ENCODE measurements at regions of chr5 and their contacts with region 1.

Region 1: DNA sequence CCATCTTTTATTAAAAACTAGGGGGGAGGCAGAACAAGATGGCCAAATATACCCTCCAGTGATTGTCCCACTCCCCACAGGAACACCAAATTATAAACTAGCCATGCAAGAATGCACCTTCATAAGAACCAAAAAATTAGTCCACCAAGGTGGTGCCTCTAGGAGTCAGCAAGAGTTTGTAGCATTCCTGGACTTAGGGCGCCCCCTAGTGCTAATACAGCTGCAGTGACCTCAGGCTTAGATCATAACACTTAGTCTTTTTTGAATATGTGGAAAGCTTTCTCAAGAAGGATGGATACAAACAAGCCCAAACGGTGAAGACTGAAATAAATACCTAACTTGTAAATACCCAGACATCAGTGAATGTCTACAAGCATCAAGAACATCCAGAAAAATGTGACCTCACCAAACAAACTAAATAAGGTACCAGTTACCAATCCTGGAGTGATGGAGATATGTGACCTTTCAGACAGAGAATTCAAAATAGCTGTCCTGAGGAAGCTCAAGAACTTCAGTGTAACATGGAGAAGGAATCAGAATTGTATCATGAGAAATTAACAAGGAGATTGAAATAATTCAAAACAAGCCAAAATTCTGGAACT is 19.3 kb downstream of the PPIP5K2 start:
- DNase-seq: peak; percentile 94
- H3K4me3 Mint-ChIP-seq: no peak overlapping the region
- H3K27ac Mint-ChIP-seq: no peak overlapping the region
- H3K4me1 Mint-ChIP-seq: peaks cover 4% of the 10 kb centered on the region
- H3K27me3 Mint-ChIP-seq: no peaks in the 10 kb centered on the region

Region 2: DNA sequence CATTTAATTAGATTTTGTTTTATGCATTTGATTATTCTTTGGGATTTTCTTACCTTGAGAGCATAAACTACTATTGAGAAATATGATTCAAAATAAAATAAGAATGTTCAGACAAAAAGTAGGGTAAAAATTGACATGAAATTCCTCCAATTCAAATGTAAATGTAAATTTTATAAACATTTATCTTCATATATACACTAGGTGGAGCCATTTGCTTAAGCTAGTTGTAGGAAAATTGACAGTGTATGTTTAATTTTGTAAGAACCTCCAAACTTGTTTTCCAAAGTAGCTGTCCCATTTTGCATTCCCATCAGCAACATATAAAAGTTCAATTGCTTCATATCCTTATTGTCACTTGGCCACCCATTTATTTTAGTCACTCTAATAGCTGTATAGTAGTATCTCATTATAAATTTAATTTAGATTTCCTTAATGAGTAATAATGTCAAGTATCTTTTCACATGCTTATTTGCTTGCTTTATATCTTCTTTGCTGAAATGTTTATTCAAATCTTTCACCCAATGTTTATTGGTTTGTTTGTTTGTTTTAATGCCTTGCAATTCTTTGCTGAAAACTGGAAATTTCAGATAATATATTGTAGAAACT is 602.9 kb before region 1 on chr5:
- intact Hi-C with region 1: loop called (anchors 1 kb)
- DNase-seq: no peak
- H3K4me3 Mint-ChIP-seq: no peak overlapping the region
- H3K27ac Mint-ChIP-seq: no peak overlapping the region
- H3K4me1 Mint-ChIP-seq: no peaks in the 10 kb centered on the region
- H3K27me3 Mint-ChIP-seq: peaks cover 7% of the 10 kb centered on the region

Region 3: DNA sequence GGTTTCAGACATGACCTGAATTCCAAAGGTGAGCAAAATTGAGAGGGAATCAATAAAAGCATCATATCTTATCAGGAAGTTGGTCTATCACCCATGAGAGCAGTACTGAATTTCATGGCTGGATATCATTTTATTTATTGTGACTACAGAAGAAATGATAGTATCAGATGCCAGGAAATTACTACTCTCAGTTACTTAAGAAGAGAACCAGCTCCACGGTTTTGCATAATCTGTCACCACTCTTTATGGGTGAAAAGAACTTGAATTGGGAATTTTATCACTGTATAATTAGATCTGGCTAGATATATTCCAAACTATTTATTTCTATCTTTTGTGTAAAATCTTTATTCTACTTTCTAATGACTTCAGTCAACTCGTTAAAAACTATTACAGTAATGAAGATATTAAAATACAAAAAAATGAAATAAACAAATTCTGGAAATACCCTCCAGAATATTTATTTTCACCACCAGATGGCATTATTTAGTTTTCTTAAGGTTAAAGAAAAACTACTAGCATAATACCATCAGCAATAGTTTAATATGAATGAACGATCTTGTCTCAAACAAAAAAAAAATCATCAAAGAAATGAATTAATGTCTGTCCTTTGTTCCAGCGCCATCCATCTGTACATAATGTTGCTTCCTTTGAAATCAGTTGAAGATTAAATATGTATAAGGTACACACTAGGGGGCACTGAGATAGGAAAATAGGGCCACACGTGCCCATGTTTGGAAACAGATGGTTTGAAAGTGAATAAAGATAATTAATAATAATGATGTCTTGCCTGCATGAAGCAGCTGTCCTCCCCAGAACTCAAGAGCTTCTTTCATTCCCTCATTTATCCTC is 555.9 kb before region 1 on chr5:
- intact Hi-C with region 1: loop called (anchors 2 kb)
- DNase-seq: no peak
- H3K4me3 Mint-ChIP-seq: no peak overlapping the region
- H3K27ac Mint-ChIP-seq: no peak overlapping the region
- H3K4me1 Mint-ChIP-seq: no peaks in the 10 kb centered on the region
- H3K27me3 Mint-ChIP-seq: peaks cover 10% of the 10 kb centered on the region

Region 4: GRCh38 chr5:102681407-102681983 is 457.9 kb before region 1 on chr5:
- intact Hi-C with region 1: loop called (anchors 1 kb)
- DNase-seq: peak; percentile 87
- H3K4me3 Mint-ChIP-seq: no peak overlapping the region
- H3K27ac Mint-ChIP-seq: no peak overlapping the region
- H3K4me1 Mint-ChIP-seq: no peaks in the 10 kb centered on the region
- H3K27me3 Mint-ChIP-seq: peaks cover 17% of the 10 kb centered on the region

Region 5: DNA sequence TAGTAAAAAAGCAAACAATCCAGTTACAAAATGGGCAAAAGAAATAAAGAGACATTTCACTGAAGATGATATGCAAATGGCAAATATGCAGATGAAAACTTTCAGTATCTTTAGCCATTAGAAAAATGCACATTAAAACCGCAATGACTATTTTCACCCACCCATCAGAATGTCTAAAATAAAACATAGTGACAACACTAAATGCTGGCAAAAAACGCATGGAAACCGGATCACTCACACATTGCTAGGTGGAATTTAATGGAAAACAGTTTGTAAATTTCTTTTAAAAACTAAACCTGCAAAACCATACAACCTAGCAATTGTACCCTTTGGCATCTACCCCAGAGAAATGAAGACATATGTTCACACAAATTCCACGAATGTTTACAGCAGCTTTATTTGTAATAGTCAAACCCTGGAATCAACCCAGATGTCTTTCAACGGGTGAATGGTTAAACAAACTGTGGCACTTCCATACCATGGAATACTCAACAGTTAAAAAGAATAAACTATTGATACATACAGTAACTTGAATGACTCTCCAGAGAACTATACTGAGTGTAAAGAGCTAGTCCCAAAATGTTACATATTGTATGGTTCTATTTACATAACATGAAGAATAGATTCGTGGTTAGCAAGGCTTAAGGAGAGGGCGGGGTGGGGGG is 401.4 kb before region 1 on chr5:
- intact Hi-C with region 1: no loop called
- DNase-seq: no peak
- H3K4me3 Mint-ChIP-seq: no peak overlapping the region
- H3K27ac Mint-ChIP-seq: no peak overlapping the region
- H3K4me1 Mint-ChIP-seq: no peaks in the 10 kb centered on the region
- H3K27me3 Mint-ChIP-seq: peaks cover 25% of the 10 kb centered on the region

Region 6: DNA sequence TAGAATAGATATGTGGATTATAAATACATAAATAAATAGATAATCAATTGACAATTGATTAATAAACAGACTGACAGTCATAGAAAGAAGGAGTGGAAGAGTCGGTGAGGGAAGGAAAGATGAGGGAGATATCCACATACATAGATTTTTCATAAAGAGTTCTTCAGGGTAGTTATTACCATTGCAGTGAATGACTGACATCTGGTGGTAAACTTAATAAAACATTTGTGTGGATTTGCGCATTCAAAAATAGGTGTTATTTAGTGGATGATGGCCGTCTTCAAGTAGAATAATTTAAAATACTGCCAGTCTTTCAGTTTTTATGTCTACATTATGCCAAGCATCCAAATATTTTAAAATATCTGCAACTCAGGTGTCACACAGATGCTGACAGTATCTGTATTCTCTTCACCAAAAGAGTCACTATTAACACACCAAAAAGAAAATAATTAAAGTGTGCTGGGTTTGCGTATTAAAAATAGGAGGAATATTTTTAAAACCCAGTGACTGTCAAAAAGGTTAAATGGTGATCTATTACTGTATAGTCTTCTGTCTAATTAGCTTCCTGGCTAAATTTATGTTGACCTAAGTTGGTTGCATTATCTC is 98.2 kb before region 1 on chr5:
- intact Hi-C with region 1: loop called (anchors 2 kb)
- DNase-seq: no peak
- H3K4me3 Mint-ChIP-seq: no peak overlapping the region
- H3K27ac Mint-ChIP-seq: no peak overlapping the region
- H3K4me1 Mint-ChIP-seq: no peaks in the 10 kb centered on the region
- H3K27me3 Mint-ChIP-seq: peaks cover 25% of the 10 kb centered on the region

Region 7: DNA sequence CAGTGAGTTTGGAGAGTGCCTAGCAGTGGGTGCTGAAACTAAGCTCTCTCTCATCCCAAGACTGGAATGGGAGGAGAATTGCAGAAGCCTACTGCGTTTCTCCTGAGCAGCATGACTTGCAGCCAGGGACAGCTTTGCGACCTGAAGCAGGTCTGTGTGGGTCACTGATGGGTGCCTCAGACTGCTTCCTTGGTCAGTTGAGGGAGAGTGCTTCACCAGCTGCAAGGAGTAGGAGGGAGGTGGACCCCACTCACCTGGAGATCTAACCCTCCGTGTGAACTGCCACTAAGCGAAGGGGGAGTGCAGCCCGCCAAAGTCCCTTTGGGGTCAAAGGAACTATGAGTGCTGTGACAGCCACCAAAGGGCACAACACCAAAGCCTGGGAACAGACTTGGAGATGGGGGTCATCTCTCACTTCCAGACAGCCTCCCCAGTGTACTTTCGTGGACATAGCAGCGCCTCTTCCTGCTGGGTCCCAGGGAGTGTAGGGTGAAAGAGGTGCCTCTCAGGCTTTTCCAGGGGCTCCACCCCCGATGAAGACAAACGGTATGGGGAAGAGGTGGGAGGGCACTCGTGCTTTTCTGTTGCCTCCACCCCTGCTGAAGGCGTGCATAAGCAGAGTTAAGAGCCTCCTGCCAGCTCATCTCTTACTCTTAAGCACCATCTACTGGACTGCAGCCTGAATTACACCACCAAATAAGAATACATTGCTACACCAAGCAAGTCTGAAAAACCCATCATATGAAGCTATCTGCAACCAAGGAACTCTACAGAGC is 84.9 kb after region 1 on chr5:
- intact Hi-C with region 1: loop called (anchors 1 kb)
- DNase-seq: peak; percentile 87
- H3K4me3 Mint-ChIP-seq: no peak overlapping the region
- H3K27ac Mint-ChIP-seq: no peak overlapping the region
- H3K4me1 Mint-ChIP-seq: peaks cover 2% of the 10 kb centered on the region
- H3K27me3 Mint-ChIP-seq: peaks cover 38% of the 10 kb centered on the region

Measured in activated CD4-positive, alpha-beta T cell treated with anti-CD3 and anti-CD28 coated beads, Interleukin-2, amount 10 ng/mL, durations not matched to agents 24 days and 14 days (primary cell).